Psoas muscle (tissue), 8 donors: ENCODE measurements at regions of chrX and their contacts with region 1.

Region 1: DNA sequence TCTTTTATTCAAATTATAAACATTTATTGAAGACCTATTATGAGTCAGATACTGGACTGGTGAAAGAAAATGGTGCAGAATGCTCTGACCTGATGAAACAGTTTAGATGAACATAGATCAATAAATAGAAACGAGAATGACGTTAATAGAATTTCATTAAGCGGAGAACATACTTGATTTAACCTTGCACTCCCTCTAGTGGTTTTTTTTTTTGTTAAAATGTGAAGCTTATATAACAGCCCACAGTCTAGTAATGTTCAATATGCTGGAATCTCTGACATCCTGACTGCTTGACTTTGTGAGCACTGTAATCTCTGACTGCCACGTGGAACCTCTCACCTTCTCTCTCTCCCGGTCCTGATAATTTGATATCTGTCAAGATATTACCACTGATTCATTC is 32.3 kb downstream of the HDAC8 start:
- DNase-seq: no peak
- ATAC-seq: peak in 3 of 4 donors; percentile 33 to 58 (median 36)
- H3K4me3 ChIP-seq: no peak overlapping the region
- H3K27ac ChIP-seq: no peak overlapping the region
- H3K4me1 ChIP-seq: peaks cover 12% of the 10 kb centered on the region
- H3K27me3 ChIP-seq: no peaks in the 10 kb centered on the region
- CTCF ChIP-seq: peak; percentile 36

Region 2: GRCh38 chrX:72079607-72080006 is 460.7 kb before region 1 on chrX:
- intact Hi-C with region 1: no loop called
- DNase-seq: peak in 1 of 2 donors; percentile 31
- ATAC-seq: peak in 3 of 4 donors; percentile 28 to 46 (median 41)
- H3K4me3 ChIP-seq: peak overlapping the region; percentile 43
- H3K27ac ChIP-seq: peak overlapping the region; percentile 41
- H3K4me1 ChIP-seq: no peaks in the 10 kb centered on the region
- H3K27me3 ChIP-seq: peaks cover 0 to 21% (median 0%) of the 10 kb centered on the region in 3 donors
- CTCF ChIP-seq: no peak

Region 3: GRCh38 chrX:72245461-72246089 is 294.7 kb before region 1 on chrX:
- intact Hi-C with region 1: loop called in 1 of 2 experiments (anchors 10 kb)
- DNase-seq: peak; percentile 40 to 69
- ATAC-seq: peak; percentile 47 to 73 (median 69)
- H3K4me3 ChIP-seq: no peak overlapping the region
- H3K27ac ChIP-seq: no peak overlapping the region
- H3K4me1 ChIP-seq: no peaks in the 10 kb centered on the region
- H3K27me3 ChIP-seq: no peaks in the 10 kb centered on the region
- CTCF ChIP-seq: peak; percentile 69

Region 4: GRCh38 chrX:72306851-72307645 is 233.3 kb before region 1 on chrX:
- intact Hi-C with region 1: loop called (anchors 5 to 10 kb)
- DNase-seq: peak; percentile 61 to 69
- ATAC-seq: peak; percentile 73 to 82 (median 78)
- H3K4me3 ChIP-seq: peak overlapping the region; percentile 71
- H3K27ac ChIP-seq: no peak overlapping the region
- H3K4me1 ChIP-seq: peaks cover 12% of the 10 kb centered on the region
- H3K27me3 ChIP-seq: peaks cover 0 to 83% (median 6%) of the 10 kb centered on the region in 3 donors
- CTCF ChIP-seq: no peak

Region 5: DNA sequence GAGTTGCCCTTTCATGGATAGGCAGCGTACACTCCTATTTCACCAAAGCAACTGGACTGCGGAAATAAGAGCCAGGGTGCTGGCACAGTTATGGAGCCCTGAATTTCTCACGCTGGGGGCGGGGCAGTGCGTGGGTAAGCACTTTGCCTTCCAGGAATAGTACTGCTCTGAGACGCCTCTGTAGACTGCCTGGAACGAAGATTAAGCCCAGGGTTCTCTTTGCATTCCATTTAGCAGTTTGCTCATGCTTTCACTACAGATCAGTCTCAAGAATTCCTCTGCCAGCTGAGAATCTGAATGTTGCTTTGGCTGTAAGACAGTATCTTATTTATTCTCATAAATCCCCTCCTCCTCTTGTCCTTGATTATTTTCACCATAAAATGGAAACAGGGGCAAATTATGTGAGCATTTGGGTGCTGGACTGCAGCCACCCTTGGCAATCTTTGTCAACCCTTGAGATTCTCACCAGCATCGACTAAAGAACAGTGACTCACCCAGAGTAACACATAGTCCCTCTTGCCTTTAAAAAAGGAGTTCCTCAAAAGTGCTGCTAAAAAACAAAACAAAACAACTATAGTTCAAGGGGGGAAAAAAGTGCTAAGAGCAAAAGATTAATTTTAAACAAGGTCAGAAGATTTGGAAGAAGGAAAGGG is 145.7 kb before region 1 on chrX:
- intact Hi-C with region 1: loop called in 1 of 2 experiments (anchors 10 kb)
- DNase-seq: peak; percentile 55 to 76
- ATAC-seq: peak; percentile 92 to 96 (median 93)
- H3K4me3 ChIP-seq: no peak overlapping the region
- H3K27ac ChIP-seq: no peak overlapping the region
- H3K4me1 ChIP-seq: peaks cover 13% of the 10 kb centered on the region
- H3K27me3 ChIP-seq: peaks cover 0 to 5% (median 0%) of the 10 kb centered on the region in 3 donors
- CTCF ChIP-seq: no peak

Region 6: DNA sequence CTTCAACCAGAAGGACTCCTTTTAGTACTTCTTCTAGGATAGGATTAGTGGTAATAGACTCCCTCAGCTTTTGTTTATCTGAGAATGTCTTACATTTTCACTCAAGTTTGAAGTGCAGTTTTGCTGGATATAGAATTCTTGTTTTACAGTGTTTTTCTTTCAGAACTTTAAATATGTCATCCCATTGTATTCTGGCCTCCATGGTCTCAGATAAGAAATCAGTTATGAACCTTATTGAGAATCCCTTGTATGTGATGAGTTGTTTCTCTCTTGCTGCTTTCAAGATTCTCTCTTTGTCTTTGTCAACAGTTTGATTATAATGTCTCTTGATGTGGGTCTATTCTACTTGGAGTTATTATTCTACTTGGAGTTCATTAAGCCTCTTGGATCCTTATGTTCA is 118.5 kb before region 1 on chrX:
- intact Hi-C with region 1: no loop called
- DNase-seq: no peak
- ATAC-seq: no peak
- H3K4me3 ChIP-seq: no peak overlapping the region
- H3K27ac ChIP-seq: no peak overlapping the region
- H3K4me1 ChIP-seq: no peaks in the 10 kb centered on the region
- H3K27me3 ChIP-seq: no peaks in the 10 kb centered on the region
- CTCF ChIP-seq: no peak